PC-9 (cell line): ENCODE measurements at regions of chr5 and their contacts with region 1.

Region 1: DNA sequence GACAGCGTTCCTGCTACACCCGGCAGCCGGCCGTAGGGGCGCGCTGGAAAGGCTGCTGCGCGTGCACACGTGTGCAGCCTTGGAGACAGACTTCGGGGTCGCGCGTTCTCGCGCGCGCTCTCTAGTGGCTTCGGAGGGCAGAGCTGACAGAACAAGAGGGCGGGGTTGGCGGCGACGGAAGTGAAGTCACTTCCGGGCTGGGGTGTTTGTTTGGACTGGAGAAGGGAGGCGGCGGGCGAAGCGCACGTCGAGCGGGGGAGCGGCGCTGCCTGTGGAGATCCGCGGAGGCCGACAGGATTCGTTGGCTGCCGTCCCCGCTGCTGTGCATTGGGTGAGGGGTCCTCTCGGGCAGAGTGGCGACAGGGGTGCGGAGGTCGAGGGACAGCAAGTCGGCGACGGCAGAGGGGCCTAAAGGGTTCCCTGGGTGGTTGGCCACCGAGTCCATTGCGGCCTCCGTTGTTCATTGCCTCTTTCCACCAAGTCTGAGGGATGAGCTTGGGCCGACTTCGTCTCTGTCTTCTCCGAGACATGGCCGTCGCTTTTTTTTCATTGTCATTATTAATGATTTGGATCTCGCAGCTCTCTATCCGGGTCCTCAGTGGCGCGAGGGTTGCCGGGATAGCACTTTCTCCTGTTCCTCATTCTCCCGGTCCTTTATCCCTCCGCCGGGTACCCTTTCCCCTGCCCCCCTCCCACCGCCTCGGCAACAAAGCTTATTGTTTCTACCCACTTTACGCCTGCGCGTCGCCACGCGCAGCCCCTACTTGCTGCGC is at the start of gene PAIP2:
- DNase-seq: peak; percentile 89 to 95
- H3K4me3 ChIP-seq: peak within 1 kb of the TSS; percentile 77
- H3K27ac ChIP-seq: peak within 1 kb of the TSS; percentile 68
- H3K4me1 ChIP-seq: peaks cover 23% of the 10 kb centered on the region
- H3K27me3 ChIP-seq: no peaks in the 10 kb centered on the region
- CTCF ChIP-seq: peak; percentile 66
- total RNA-seq, gene PAIP2: 79.4 and 90.5 TPM in 2 replicates

Region 2: DNA sequence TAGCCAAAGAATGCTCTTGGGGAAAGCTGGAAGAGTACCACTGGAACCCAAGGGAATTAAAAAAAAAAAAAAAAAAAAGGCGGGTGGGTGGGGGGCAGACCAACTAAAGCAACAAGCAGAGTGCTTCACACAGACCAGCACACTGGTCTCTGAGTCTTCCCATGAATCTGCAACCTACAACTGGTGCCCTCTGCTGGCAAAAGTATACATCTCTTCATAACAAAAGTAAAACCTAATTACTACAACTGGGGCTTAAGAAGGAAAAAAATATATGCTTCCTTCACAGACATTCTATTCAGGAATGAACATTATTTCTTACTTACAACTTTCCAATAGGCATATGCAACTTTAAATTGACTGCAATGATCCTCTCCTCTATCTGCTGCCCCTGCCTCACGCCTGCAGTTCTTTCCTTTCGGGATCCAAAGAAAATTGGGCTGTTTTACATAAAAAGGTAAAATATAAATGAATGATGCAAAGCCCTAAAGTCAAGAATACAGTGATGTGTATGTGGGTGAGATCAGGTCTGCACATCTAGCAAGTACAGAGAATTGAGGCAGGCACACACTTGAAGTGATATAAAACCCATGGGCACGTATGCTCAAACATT is 1598.7 kb before region 1 on chr5:
- CTCF ChIA-PET with region 1: no interaction called
- POLR2A ChIA-PET with region 1: no interaction called
- intact Hi-C with region 1: no loop called
- DNase-seq: peak; percentile 31 to 52
- H3K4me3 ChIP-seq: no peak overlapping the region
- H3K27ac ChIP-seq: no peak overlapping the region
- H3K4me1 ChIP-seq: peaks cover 4% of the 10 kb centered on the region; the same call in 1 of the 2 replicates
- H3K27me3 ChIP-seq: no peaks in the 10 kb centered on the region
- CTCF ChIP-seq: peak; percentile 75

Region 3: DNA sequence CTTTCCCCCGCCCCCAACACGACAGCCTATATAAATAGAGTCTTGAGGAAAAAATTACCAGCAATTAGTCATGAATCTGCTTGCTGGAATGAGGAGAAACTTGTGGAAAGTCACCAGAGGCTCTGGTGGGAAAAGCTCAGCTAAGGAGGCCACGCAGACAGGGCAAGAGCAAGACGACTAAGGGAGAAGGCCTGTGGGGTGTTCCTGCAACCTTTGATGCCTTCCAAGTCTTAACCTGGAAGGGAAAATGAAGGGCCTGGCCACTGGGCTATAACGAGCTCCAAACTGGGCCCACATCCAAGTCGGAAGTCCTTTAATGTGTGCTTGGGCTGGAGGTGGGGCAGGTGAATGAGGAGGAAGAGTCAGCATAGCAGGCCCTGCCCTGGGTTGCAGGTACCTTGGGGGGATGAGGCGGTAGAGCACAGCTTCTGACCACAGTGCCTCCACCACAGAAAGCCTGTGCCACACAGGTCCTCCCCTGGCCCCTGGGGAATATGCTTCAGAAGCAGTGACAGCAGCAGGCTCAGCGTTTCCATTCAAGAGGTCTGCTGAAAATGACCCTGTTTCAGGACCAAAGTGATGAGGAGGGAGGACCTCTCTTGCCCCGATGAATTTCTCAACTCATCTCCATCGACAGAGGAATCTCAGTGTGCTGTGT is 373.9 kb before region 1 on chr5:
- CTCF ChIA-PET with region 1: no interaction called
- POLR2A ChIA-PET with region 1: no interaction called
- intact Hi-C with region 1: no loop called
- DNase-seq: no peak
- H3K4me3 ChIP-seq: no peak overlapping the region
- H3K27ac ChIP-seq: no peak overlapping the region
- H3K4me1 ChIP-seq: peaks cover 4% of the 10 kb centered on the region; the same call in 1 of the 2 replicates
- H3K27me3 ChIP-seq: no peaks in the 10 kb centered on the region
- CTCF ChIP-seq: no peak

Region 4: GRCh38 chr5:139293504-139294373 is 48.1 kb before region 1 on chr5 and contains the start of gene MATR3:
- CTCF ChIA-PET with region 1: interaction called, 5 read pairs
- POLR2A ChIA-PET with region 1: interaction called, 13 read pairs
- intact Hi-C with region 1: loop called (anchors 5 kb)
- DNase-seq: peak; percentile 85 to 92
- H3K4me3 ChIP-seq: peak within 1 kb of the TSS; percentile 94
- H3K27ac ChIP-seq: peak within 1 kb of the TSS; percentile 97
- H3K4me1 ChIP-seq: peaks cover 28% of the 10 kb centered on the region
- H3K27me3 ChIP-seq: no peaks in the 10 kb centered on the region
- CTCF ChIP-seq: no peak
- total RNA-seq, gene MATR3: 129 and 145 TPM in 2 replicates

Region 5: DNA sequence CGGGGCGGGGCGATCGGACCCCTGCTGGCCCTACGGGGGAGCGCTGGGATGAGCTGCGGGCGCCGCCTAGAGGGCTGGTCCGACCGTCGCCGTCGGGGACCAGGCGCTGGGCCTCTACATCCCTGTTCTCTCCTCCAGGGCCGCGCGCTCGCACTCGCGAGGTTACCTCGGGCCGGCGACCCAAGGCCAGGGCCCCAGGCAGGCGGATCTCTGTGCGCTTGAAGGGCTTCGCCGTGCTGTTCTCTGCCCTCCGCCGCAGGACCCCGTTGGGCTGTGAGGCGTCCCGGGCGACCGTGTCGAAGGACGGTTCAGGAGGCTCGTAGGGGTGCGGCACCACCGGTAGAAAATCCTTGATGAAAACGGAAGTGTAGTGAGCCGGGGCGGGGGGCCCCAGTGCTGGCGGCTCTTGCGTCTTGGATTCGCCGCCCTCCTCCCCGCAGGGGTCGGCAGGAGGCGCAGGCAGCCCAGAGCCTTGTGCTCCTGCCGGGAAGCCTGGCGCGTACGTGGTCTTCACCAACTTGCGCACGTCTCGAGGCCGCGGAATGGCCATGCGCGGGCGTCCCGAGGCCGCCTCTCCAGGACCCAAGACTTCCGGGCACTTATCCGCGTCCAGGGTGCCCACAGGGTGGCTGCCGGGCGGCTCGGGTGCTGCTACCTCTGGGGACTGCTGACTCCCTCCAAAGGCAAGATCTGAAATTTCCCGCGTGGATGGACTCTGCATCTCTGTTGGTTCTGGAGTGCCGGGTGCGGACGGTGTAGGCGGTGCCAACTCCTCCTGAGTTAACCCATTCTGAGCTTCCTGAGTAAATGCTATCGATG is 51.1 kb after region 1 on chr5:
- CTCF ChIA-PET with region 1: no interaction called
- POLR2A ChIA-PET with region 1: no interaction called
- intact Hi-C with region 1: loop called (anchors 5 kb)
- DNase-seq: peak in 1 of 2 experiments; percentile 52
- H3K4me3 ChIP-seq: peak overlapping the region; percentile 52; the same call in 1 of the 2 replicates
- H3K27ac ChIP-seq: no peak overlapping the region
- H3K4me1 ChIP-seq: peaks cover 36% of the 10 kb centered on the region
- H3K27me3 ChIP-seq: no peaks in the 10 kb centered on the region
- CTCF ChIP-seq: peak; percentile 40; the same call in 1 of the 2 replicates

Region 6: GRCh38 chr5:139417214-139417613 is 75.4 kb after region 1 on chr5:
- CTCF ChIA-PET with region 1: interaction called, 14 read pairs
- POLR2A ChIA-PET with region 1: interaction called, 3 read pairs
- intact Hi-C with region 1: no loop called
- DNase-seq: no peak
- H3K4me3 ChIP-seq: no peak overlapping the region
- H3K27ac ChIP-seq: no peak overlapping the region
- H3K4me1 ChIP-seq: no peaks in the 10 kb centered on the region
- H3K27me3 ChIP-seq: no peaks in the 10 kb centered on the region
- CTCF ChIP-seq: no peak

Region 7: GRCh38 chr5:140780512-140780911 is 1438.7 kb after region 1 on chr5:
- CTCF ChIA-PET with region 1: no interaction called
- POLR2A ChIA-PET with region 1: no interaction called
- intact Hi-C with region 1: no loop called
- DNase-seq: no peak
- H3K4me3 ChIP-seq: no peak overlapping the region
- H3K27ac ChIP-seq: no peak overlapping the region
- H3K4me1 ChIP-seq: no peaks in the 10 kb centered on the region
- H3K27me3 ChIP-seq: no peaks in the 10 kb centered on the region
- CTCF ChIP-seq: no peak